Pancreas (tissue), 10 donors: ENCODE measurements at regions of chr10 and their contacts with region 1.

Region 1: DNA sequence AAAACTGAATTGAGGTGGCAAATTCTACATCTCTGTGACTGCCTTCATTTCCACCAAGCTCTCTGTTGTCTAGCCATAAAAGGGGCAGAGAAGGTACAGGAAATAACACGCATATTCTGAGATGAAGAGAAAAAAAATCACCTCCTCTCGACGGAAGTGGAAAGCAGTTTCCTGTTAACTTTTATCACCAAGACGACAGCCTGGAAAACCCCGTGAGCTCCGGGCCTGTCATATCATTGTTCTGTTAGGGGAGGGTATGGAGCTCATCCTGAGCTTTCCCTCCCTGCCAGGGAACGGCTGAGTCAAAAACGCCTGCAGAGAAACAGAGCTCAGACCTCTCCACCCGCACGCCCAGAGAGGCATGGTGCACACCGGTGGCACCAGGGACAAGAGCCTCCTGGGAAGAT is 200.3 kb downstream of the PRPF18 start:
- DNase-seq: peak in 1 of 6 donors; percentile 20
- ATAC-seq: peak in 3 of 4 donors; percentile 28 to 49 (median 47)
- H3K4me3 ChIP-seq: no peak overlapping the region
- H3K27ac ChIP-seq: peak overlapping the region in 2 of 4 donors; percentile 19 to 47
- H3K4me1 ChIP-seq: no peaks in the 10 kb centered on the region
- H3K27me3 ChIP-seq: no peaks in the 10 kb centered on the region
- CTCF ChIP-seq: no peak

Region 2: GRCh38 chr10:13659897-13660550 is 127.0 kb before region 1 on chr10:
- intact Hi-C with region 1: loop called in 1 of 3 experiments (anchors 10 kb)
- DNase-seq: peak in 5 of 6 donors; percentile 36 to 86 (median 65)
- ATAC-seq: peak; percentile 62 to 86 (median 78)
- H3K4me3 ChIP-seq: no peak overlapping the region
- H3K27ac ChIP-seq: no peak overlapping the region
- H3K4me1 ChIP-seq: no peaks in the 10 kb centered on the region
- H3K27me3 ChIP-seq: no peaks in the 10 kb centered on the region
- CTCF ChIP-seq: peak; percentile 71 to 82 (median 81)

Region 3: DNA sequence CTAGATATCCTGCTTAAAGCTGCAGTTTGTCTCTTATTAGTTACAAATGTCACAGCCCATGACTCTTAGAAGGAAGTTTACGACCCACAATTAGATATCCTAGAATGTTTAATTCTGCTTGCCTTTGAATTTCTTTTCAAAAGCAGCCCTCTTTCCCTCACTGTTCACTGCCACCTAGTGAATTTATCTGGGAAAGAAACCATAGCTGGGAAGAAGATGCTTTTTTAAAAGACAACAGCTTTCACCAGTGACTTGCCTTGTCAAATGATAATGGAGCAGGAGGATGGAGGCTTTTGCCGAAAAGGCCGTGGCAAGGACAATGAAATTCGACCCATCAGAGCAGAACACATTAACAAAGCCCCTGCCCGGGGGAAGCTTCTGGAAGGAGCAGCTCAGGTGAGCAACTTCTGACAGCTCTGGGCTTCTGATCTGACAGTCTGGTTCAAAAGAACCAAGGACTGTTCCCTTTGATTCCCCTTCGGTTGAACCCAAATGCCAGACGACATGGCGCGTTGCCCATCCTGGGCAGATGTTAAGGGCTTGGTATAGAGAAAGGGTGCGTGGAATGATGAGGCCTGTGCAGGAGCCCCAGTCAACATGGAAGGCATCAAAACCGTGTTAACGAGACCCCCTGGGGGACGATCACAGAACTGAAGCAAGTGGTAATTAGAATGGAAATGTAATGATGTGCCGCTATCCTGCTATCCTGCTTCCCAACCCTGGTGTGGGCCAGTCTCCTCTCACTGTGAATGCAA is 306.9 kb after region 1 on chr10:
- intact Hi-C with region 1: loop called in 1 of 3 experiments (anchors 5 kb)
- DNase-seq: no peak
- ATAC-seq: peak in 1 of 4 donors; percentile 30
- H3K4me3 ChIP-seq: no peak overlapping the region
- H3K27ac ChIP-seq: no peak overlapping the region
- H3K4me1 ChIP-seq: peaks cover 0 to 3% (median 0%) of the 10 kb centered on the region in 3 donors
- H3K27me3 ChIP-seq: no peaks in the 10 kb centered on the region
- CTCF ChIP-seq: no peak

Region 4: DNA sequence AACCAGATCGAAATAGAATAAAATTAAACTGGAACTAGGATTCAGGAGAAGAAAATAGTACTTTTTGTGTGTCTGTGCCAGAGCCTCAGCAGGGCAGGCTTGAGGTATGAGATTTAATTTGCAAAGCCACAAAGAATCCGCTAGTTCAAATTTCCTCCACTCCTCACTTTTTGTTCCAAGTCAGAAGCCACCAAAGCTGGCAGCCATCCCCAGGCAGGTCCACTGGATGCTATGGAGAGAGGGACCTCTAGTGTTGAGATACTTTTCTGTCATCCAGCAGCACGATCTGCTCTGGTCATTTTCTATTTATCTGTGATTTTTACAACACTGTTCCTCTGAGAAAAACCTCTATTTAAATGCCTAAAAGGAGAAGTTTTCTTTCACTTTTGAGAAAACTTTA is 691.6 kb after region 1 on chr10:
- intact Hi-C with region 1: loop called in 1 of 3 experiments (anchors 10 kb)
- DNase-seq: peak; percentile 69 to 88 (median 78)
- ATAC-seq: peak; percentile 93 to 98 (median 96)
- H3K4me3 ChIP-seq: no peak overlapping the region
- H3K27ac ChIP-seq: no peak overlapping the region
- H3K4me1 ChIP-seq: peaks cover 0 to 8% (median 0%) of the 10 kb centered on the region in 3 donors
- H3K27me3 ChIP-seq: no peaks in the 10 kb centered on the region
- CTCF ChIP-seq: peak; percentile 13 to 55 (median 54)